ENCODE measurements at regions of chr3 and their contacts with region 1.

Region 1: GRCh38 chr3:49032646-49033304 is 3.6 kb upstream of the IMPDH2 start:
- DNase-seq: no peak
- ATAC-seq: no peak
- H3K4me3 ChIP-seq: no peak overlapping the region
- H3K27ac ChIP-seq: no peak overlapping the region
- H3K4me1 ChIP-seq: peaks cover 11% of the 10 kb centered on the region
- H3K27me3 ChIP-seq: no peaks in the 10 kb centered on the region
- CTCF ChIP-seq: no peak

Region 2: GRCh38 chr3:49081429-49081828 is 48.7 kb after region 1 on chr3:
- intact Hi-C with region 1: loop called (anchors 5 kb)
- DNase-seq: no peak
- ATAC-seq: no peak
- H3K4me3 ChIP-seq: no peak overlapping the region
- H3K27ac ChIP-seq: no peak overlapping the region
- H3K4me1 ChIP-seq: no peaks in the 10 kb centered on the region
- H3K27me3 ChIP-seq: no peaks in the 10 kb centered on the region
- CTCF ChIP-seq: no peak

Region 3: DNA sequence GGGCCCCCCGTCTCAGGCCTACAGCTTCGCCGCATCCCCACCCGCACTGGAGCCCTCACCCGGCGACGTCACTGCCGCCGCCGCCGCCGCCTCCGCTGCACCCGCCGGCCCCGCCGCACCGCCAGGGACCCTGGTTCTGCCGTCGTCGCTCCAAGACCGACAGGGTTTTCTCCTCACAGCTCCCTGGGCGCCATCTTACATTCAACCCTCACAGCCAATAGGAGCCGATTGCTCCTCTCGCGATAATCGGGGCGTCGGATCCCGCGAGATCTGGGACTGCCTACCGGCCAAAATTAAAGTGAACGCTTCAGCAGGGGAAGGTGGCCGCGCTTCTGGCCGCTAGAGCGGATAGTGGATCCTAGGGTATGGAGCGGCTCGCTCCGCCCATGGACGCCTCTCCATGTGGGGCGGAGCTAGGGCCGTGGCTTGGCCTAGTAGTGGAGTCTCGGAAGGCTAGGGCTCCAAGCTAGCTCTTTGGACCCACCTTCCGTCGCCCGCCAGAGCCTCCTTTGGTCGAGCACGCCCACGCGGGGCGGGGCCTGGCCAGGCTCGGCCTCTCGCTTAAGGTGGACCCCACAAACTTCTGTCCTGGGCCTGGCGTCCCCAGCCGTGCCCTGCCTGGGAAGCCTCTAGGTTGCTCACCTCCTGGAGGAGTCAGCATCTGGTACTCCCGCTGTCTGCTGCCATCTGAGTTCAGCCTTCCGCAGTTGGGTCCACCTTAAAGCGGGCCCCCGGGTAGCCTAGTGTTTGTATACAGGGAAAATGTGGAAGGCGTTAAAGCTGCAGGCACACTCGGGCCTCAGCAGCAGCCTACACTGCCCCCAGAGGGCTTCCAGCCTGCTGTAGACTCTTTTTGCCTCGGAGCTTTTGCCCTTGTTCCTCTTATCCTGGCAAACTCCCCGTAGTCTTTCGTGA is 61.3 kb after region 1 on chr3 and contains the start of gene QRICH1:
- intact Hi-C with region 1: loop called in 1 of 2 experiments (anchors 5 kb)
- DNase-seq: peak; percentile 97 to 99
- ATAC-seq: peak; percentile 91 to 93 (median 92)
- H3K4me3 ChIP-seq: peak within 1 kb of the TSS; percentile 95
- H3K27ac ChIP-seq: peak within 1 kb of the TSS; percentile 89
- H3K4me1 ChIP-seq: peaks cover 42% of the 10 kb centered on the region
- H3K27me3 ChIP-seq: no peaks in the 10 kb centered on the region
- CTCF ChIP-seq: peak; percentile 55
- total RNA-seq, gene QRICH1: 52.8 to 83.9 (median 71.1) TPM